ENCODE measurements at regions of chr3 and their contacts with region 1.

Region 1: DNA sequence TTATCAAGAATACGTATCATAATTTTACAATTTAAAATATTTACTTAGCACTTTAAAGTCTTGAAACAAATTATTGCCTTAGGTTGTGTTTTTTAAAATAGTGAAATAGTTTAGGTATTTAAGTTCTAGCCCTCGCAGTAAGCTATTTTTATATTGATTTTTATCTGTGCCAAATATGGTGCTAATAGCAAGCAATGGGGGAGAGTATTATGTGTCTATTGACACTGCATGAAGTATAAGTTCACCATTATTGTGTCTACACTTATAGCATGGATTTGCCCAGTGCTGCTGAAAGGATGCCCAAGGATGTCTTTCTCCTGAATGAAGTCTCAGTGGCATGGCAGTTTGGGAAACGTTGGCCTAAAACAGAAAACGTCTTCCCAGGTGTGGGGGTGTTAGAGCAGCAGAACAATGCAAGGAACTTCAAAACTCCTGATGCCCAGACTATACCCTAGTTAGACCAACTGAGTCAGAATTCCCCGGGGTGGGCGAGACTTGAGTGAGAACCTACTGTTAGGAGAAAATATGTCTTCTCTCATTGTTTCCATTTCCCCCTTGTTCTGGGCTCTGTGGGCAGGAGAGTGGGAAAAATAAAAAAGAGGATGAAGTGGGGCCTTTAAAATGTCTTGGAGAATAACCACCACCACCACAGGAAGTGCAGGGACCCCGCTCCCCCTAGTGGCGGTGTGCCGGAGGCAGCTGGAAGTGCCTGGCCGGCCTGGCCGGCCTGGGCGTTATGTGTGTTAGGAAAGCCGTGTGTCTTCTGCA is 104.2 kb upstream of the SLC7A14 start:
- DNase-seq: no peak
- H3K4me3 ChIP-seq: no peak overlapping the region
- H3K27ac ChIP-seq: no peak overlapping the region; the same call in 1 of the 2 replicates
- H3K4me1 ChIP-seq: peaks cover 33% of the 10 kb centered on the region
- H3K27me3 ChIP-seq: no peaks in the 10 kb centered on the region
- CTCF ChIP-seq: peak; percentile 66

Region 2: DNA sequence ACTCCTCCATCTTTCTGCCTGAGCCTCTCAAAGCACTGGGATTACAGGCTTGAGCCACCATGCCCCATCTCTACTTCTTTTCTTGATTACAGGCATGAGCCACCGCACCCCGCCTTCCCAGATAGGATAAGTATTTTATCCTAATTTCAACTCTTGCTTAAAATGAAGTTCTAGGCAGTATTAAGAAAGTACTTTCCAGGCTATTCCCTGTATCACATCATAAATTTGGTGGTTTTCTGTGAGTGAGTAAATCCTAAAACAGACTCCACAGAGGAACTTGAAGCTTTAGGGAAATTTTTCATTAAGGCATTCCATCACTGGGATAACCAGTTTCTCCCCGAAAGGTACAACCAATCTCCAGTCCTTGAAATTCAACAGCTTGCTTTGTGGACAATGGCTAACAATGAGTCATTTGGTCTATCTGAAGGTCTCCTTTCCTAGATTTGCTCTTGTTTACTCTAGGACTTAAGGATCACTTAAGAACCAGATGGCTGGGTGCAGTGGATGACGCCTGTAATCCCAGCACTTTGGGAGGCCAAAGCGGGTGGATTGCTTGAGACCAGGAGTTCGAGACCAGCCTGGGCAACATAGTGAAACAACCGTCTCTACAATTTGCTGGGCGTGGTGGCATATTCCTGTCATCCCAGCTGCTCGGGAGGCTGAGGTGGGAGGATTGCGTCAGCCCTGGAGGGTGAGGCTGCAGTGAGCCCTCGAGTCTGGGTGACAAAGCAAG is 382.2 kb before region 1 on chr3:
- CTCF ChIA-PET with region 1: no interaction called
- POLR2A ChIA-PET with region 1: no interaction called
- intact Hi-C with region 1: loop called (anchors 5 kb)
- DNase-seq: peak; percentile 59 to 99
- H3K4me3 ChIP-seq: no peak overlapping the region
- H3K27ac ChIP-seq: peak overlapping the region; percentile 42
- H3K4me1 ChIP-seq: peaks cover 19% of the 10 kb centered on the region
- H3K27me3 ChIP-seq: no peaks in the 10 kb centered on the region
- CTCF ChIP-seq: no peak

Region 3: DNA sequence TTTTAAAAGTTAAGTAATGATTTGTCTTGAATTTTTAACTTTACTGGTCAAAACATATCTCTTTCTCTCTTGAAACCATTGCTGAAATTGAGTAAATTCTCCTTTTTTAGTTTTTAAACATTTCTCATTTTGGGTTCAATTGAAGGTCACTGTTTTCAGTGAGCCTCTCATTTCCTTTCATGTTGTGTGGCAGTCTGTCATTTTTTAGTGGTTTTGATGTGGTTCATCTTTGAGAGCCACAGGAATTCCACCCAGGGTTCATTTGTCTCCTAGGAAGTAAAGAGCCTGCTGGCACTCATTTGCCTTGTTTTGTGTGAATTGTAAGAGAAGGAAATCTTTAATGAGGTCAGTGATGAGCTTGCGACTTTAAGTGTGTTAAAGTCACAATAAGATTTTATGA is 261.0 kb before region 1 on chr3:
- CTCF ChIA-PET with region 1: no interaction called
- POLR2A ChIA-PET with region 1: no interaction called
- intact Hi-C with region 1: loop called (anchors 5 kb)
- DNase-seq: no peak
- H3K4me3 ChIP-seq: no peak overlapping the region
- H3K27ac ChIP-seq: no peak overlapping the region
- H3K4me1 ChIP-seq: no peaks in the 10 kb centered on the region
- H3K27me3 ChIP-seq: no peaks in the 10 kb centered on the region
- CTCF ChIP-seq: no peak

Region 4: GRCh38 chr3:170717410-170718402 is 27.6 kb after region 1 on chr3:
- CTCF ChIA-PET with region 1: no interaction called
- POLR2A ChIA-PET with region 1: interaction called, 17 read pairs
- intact Hi-C with region 1: loop called (anchors 1 kb)
- DNase-seq: peak; percentile 60 to 63
- H3K4me3 ChIP-seq: no peak overlapping the region
- H3K27ac ChIP-seq: no peak overlapping the region
- H3K4me1 ChIP-seq: peaks cover 26% of the 10 kb centered on the region
- H3K27me3 ChIP-seq: no peaks in the 10 kb centered on the region
- CTCF ChIP-seq: no peak

Region 5: GRCh38 chr3:170726976-170727661 is 37.0 kb after region 1 on chr3:
- CTCF ChIA-PET with region 1: no interaction called
- POLR2A ChIA-PET with region 1: interaction called, 22 read pairs
- intact Hi-C with region 1: loop called (anchors 1 kb)
- DNase-seq: peak; percentile 43 to 76
- H3K4me3 ChIP-seq: peak overlapping the region; percentile 19; the same call in 1 of the 2 replicates
- H3K27ac ChIP-seq: peak overlapping the region; percentile 81
- H3K4me1 ChIP-seq: peaks cover 27% of the 10 kb centered on the region
- H3K27me3 ChIP-seq: no peaks in the 10 kb centered on the region
- CTCF ChIP-seq: no peak

Region 6: DNA sequence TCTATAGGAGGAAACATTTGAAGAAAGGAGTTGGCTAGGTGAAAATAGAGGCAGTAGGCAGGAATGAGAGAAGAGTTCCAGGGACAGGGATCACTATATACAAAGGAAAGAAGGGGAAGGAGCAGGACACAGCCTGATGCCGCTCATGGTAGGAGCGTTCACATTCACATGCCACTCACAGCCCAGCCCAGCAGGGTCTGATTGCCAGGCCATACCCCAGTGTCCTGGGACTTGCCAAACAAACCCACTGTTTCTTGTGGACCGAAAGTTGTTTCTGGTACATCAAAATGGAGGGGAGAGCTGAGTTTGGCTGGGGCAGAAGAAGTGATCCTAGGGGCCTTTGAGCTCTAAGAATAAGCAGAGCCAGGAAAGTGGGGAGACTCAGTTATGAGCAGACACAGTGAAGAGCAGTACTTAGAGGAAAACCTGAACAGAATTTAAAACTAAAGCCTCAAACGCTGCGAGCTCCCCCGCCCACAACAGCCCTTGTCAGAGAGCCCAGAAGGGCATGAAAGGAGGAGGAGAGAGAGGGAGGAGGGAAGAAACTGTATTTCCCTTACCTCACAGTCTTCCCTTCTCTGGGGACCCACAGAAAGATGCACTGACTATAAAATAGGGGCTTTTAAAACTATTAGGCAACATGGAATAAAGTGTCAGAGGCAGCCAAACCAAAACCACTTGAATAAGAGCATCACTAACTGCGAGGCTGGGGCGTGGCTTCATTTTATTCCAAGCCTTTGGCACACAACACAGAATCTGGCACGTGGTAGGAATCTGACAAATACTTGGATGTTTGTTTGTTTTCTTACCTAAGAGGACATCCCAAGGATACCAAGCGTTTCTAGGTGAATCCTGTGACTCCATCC is 50.9 kb after region 1 on chr3:
- CTCF ChIA-PET with region 1: no interaction called
- POLR2A ChIA-PET with region 1: no interaction called
- intact Hi-C with region 1: loop called (anchors 1 kb)
- DNase-seq: peak; percentile 59 to 88
- H3K4me3 ChIP-seq: peak overlapping the region; percentile 6; the same call in 1 of the 2 replicates
- H3K27ac ChIP-seq: peak overlapping the region; percentile 81
- H3K4me1 ChIP-seq: peaks cover 72% of the 10 kb centered on the region
- H3K27me3 ChIP-seq: no peaks in the 10 kb centered on the region
- CTCF ChIP-seq: no peak